Right ventricle myocardium inferior (tissue), 1 donor: ENCODE measurements at regions of chr2 and their contacts with region 1.

Region 1: GRCh38 chr2:174682578-174683391 is 81.5 kb downstream of the CHRNA1 start:
- DNase-seq: peak; percentile 85
- ATAC-seq: peak; percentile 86

Region 2: GRCh38 chr2:174577967-174578589 is 104.7 kb before region 1 on chr2:
- intact Hi-C with region 1: loop called (anchors 10 kb)
- DNase-seq: no peak
- ATAC-seq: no peak